Head of caudate nucleus (tissue), 42 donors: ENCODE measurements at regions of chr2 and their contacts with region 1.

Region 1: DNA sequence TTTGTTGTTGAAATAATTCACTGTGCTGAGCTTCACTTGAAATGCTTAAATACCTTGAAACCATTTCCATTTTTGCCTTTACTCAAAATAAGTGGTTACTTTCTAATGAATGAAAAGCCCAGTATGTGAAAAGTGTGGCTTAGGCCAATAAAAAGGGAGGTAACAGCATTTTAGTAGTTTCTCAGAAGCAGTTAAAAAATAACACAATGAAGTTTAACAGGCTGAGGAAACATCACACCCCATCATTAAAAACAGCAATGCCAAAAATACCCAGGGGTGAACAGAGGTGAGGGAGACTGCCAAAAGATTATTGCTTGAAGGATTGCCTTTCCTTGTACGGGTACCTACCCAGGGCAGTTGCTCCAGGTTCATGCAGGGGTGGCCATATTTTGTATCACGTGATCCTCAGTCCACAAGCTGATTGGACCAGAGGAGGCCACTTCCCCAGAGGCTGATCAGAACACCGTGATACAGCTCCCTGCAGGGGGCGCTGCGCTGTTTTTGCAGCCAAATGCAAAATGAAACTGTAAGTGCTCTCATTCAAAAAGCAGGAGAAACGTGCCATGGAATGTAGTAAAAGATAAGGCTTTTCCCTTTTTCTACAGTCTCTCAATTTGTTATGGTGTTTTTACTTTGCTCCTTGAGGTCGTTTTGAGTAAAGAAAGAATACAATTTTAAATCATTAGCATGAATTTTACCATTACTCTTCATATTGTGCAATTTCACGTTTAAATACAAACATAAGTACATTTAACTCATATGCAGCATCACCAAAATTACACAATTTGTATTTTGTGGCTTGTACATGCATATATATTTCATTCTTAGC is 70.2 kb upstream of the SH3BP4 start:
- DNase-seq: peak; percentile 60 to 98 (median 91)

Region 2: DNA sequence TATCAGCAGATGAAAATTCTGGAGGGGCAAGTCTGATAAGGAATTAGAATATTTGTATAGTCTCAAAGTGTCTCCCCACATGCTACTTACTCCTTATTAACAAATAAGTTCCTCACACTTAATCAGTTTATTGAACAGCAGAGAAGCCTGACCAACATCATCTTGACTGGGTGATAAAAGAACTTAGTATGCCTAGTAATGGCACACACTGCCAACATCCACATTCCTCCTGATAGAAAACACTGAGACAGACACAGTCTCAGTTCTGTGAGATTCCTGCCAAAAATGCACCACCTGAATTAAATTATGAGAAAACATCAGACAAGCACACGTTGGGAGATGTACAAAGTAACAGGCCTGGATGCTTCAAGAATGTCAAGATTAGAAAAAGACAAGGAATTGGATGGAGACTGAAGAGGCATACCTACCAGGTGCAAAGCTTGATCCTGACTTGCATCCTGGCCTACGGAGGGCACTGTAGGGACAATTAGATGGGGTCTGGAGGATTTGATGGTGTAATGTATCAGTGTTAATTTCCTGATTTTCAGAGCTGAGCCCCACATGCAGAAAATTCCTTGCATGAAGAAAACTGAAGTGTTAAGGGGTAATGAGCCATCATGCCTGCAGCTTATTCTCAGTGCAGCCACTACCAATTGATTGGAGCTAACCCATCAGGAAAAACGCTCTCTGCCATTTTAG is 130.2 kb before region 1 on chr2:
- intact Hi-C with region 1: no loop called
- DNase-seq: no peak

Region 3: GRCh38 chr2:234823877-234824376 is 57.7 kb before region 1 on chr2:
- intact Hi-C with region 1: no loop called
- DNase-seq: no peak

Region 4: DNA sequence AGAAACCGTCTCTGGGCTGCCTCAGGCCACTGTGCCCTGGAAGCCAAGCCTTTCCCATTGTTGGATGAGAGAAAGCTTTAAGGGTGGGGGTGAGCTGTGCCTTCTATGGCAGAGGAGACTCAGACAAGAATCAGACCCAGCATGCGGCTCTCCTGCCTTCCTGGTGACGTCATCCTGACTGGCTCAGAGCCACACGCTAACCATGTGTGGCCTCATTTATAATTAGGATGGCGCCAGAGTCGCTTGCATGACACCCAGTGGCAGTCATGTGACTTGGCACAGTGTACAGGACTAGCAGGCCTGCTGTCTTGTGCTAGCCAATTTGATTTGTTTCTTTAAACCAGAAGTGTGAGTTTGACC is 169.3 kb after region 1 on chr2:
- intact Hi-C with region 1: loop called (anchors 5 kb)
- DNase-seq: peak; percentile 69 to 98 (median 90)

Region 5: DNA sequence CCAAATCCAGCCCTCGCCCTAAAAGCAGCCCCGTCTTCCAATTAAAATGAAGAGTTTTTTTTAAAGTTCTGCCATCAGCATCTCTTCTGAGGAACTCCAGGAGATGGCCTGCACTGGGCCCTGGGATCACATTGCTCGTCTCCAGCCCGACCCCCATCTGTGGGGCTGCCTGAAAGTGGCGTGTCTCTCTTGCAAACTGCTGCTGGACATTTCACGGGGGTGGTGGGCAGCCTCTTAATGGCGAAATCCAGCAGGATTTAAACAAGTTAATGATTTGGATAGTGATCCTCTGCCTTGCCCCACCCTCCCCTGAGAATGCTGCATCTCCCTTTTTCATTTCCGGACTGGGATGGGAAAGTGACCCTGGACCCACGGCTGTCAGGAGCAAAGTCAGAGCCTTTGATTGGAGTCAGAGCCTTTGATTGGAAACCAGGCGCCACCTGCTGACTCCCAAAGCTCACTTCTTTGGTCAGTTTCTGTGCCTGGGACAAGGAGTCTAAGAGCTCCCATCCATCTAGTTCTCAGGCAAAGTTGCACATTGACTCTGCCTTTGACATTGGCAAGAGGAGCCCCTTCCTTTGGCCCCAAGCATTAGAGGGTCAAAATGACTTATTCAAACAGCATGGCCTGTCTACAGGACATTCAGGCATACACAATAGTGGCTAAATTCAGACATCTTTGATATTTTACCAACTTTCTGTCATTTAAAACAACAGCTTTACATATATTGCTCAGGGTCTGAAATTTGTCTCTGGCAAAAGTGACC is 225.4 kb after region 1 on chr2:
- intact Hi-C with region 1: loop called (anchors 10 kb)
- DNase-seq: peak; percentile 31 to 90 (median 74)